GM10248 (cell line): ENCODE measurements at regions of chr7 and their contacts with region 1.

Region 1: DNA sequence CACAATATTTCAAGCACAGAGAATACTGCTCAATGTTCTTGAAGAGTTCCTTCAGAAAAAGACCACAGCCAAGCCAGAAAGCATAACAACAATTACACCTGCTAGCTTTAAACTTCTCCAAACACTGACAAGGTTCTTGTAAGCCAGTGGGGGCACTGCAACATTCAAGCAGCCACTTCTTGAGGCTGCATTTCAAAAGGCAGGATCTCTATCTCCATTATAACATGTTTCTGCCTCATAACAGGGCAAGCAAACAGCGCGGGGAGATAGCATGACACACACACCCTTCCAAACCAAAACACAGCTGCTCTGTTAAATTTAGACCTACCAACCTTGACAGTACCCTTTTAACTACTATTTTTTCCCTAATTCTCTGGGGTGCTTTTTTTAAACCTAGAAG is 30.8 kb downstream of the CHCHD3 start:
- DNase-seq: no peak
- CTCF ChIP-seq: peak; percentile 45

Region 2: GRCh38 chr7:132825932-132826835 is 224.9 kb before region 1 on chr7:
- CTCF ChIA-PET with region 1: no interaction called
- POLR2A ChIA-PET with region 1: no interaction called
- DNase-seq: no peak
- CTCF ChIP-seq: no peak

Region 3: GRCh38 chr7:133040674-133041073 is 10.4 kb before region 1 on chr7:
- CTCF ChIA-PET with region 1: interaction called, 22 read pairs
- POLR2A ChIA-PET with region 1: no interaction called
- DNase-seq: no peak
- CTCF ChIP-seq: no peak